ENCODE measurements at regions of chr2 and their contacts with region 1.

Region 1: GRCh38 chr2:47628904-47629303 is 154.0 kb upstream of the MSH6 start:
- DNase-seq: no peak
- H3K4me3 ChIP-seq: no peak overlapping the region
- H3K27ac ChIP-seq: no peak overlapping the region
- H3K4me1 ChIP-seq: no peaks in the 10 kb centered on the region
- H3K27me3 ChIP-seq: no peaks in the 10 kb centered on the region
- CTCF ChIP-seq: no peak

Region 2: DNA sequence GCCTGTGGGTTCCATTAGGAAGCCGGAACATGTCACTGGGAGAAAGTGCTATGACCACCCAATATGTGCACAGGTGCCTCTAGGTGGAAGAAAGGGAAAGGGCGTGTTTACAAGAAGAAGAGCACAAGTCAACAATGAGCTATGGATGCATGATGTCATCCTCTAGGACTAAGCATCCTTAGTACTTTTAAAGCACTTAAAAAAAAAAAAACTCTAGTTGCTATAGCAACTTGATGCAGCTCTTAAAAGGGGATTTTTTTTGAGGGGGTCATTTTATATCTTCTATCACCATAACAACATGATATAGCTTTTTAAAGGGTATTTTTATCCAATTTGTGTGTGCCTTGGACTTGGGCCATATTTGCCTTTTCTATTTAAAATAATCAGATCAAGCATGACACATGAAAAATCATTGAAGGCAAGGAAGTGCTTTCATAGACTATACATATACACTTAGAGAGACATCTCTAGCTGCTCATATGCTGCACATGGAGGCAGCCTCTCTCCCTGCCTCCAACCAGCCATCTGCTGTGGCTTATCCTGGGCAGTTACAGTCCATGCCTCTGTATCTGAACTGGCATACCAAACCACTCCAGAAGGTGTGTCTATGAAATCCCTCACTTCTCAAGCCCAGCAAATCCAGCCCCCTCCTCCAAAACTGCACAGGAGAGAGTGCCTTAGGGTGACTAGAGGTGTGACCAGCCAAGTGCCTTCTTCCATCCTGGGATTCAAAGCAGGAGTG is 60.6 kb before region 1 on chr2:
- CTCF ChIA-PET with region 1: no interaction called
- POLR2A ChIA-PET with region 1: interaction called, 18 read pairs
- intact Hi-C with region 1: no loop called
- DNase-seq: no peak
- H3K4me3 ChIP-seq: no peak overlapping the region
- H3K27ac ChIP-seq: no peak overlapping the region
- H3K4me1 ChIP-seq: no peaks in the 10 kb centered on the region
- H3K27me3 ChIP-seq: peaks cover 80% of the 10 kb centered on the region
- CTCF ChIP-seq: no peak

Region 3: DNA sequence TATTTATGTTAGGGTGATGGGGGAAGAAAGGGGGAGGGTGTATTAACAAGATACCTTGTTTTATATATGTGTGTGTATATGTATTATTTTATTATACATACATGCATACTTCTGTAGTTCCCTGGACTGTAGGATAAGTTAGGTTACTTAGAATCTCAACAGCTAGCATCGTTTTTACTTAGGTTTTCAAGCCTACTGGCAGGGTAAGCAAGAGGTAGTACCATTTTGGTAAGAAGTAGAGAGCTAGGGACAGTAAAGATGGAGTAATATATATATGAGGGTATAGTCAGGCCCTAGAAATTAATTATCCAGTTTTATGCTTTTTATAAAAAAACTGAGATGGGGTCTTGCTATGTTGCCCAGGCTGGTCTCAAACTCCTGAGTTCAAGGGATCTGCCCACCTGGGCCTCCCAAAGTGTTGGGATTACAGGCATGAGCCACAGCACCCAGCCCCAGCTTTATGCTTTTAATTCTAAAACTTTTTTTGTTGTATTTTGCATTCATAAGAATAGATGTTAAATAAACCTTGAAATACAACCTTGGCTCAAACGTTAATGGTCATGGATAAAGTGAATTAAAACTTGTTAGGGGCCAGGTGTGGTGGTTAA is 167.3 kb after region 1 on chr2:
- CTCF ChIA-PET with region 1: no interaction called
- POLR2A ChIA-PET with region 1: no interaction called
- intact Hi-C with region 1: no loop called
- DNase-seq: no peak
- H3K4me3 ChIP-seq: no peak overlapping the region
- H3K27ac ChIP-seq: no peak overlapping the region
- H3K4me1 ChIP-seq: no peaks in the 10 kb centered on the region
- H3K27me3 ChIP-seq: no peaks in the 10 kb centered on the region
- CTCF ChIP-seq: no peak

Region 4: DNA sequence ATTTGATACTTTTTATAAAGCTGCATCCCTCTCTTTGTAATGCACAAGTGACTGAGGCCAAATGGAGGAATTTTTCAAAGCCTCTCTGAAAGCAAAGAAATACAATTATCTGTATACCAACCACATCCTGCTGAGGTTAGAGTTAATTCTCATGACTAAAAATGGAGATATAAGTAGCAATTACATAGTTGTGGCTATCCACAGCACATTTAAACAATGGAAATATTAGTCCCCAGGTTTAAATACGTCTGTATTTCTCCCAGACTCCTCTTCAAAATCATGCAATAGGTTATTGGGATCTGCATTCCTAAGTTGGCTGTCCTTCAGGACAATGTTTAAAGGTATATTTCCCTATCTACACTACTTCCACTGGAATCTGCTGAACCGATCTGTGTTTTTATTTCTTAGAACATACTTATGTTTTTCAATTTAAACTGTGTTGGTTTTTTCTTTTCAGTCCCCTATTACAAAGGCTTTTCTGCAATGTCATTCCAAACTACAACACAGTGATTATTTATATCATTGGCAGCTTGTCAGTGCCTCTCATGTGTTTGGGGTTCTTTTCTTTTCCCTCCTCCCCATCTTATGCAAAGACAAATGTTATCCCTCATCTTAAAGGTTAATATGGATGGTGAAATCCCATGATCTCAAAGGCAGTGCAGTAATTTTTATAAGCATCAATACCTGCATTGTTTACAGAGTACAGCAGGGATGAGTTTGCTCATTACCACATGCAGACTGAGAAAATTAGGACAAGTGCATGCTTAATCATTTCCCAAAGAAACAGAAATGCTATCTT is 1660.2 kb after region 1 on chr2:
- CTCF ChIA-PET with region 1: no interaction called
- POLR2A ChIA-PET with region 1: no interaction called
- intact Hi-C with region 1: no loop called
- DNase-seq: no peak
- H3K4me3 ChIP-seq: no peak overlapping the region
- H3K27ac ChIP-seq: no peak overlapping the region
- H3K4me1 ChIP-seq: no peaks in the 10 kb centered on the region
- H3K27me3 ChIP-seq: no peaks in the 10 kb centered on the region
- CTCF ChIP-seq: no peak

Measured in A673 (cell line).